A673 (cell line): ENCODE measurements at regions of chr9 and their contacts with region 1.

Region 1: GRCh38 chr9:110767559-110768063 is 99.0 kb downstream of the MUSK start:
- DNase-seq: no peak
- H3K4me3 ChIP-seq: no peak overlapping the region
- H3K27ac ChIP-seq: no peak overlapping the region
- H3K4me1 ChIP-seq: peaks cover 14% of the 10 kb centered on the region
- H3K27me3 ChIP-seq: no peaks in the 10 kb centered on the region
- CTCF ChIP-seq: no peak

Region 2: GRCh38 chr9:110785166-110785565 is 17.6 kb after region 1 on chr9:
- CTCF ChIA-PET with region 1: no interaction called
- POLR2A ChIA-PET with region 1: interaction called, 10 read pairs
- intact Hi-C with region 1: no loop called
- DNase-seq: no peak
- H3K4me3 ChIP-seq: no peak overlapping the region
- H3K27ac ChIP-seq: no peak overlapping the region
- H3K4me1 ChIP-seq: peaks cover 7% of the 10 kb centered on the region
- H3K27me3 ChIP-seq: no peaks in the 10 kb centered on the region
- CTCF ChIP-seq: no peak